ENCODE measurements at regions of chr18 and their contacts with region 1.

Region 1: DNA sequence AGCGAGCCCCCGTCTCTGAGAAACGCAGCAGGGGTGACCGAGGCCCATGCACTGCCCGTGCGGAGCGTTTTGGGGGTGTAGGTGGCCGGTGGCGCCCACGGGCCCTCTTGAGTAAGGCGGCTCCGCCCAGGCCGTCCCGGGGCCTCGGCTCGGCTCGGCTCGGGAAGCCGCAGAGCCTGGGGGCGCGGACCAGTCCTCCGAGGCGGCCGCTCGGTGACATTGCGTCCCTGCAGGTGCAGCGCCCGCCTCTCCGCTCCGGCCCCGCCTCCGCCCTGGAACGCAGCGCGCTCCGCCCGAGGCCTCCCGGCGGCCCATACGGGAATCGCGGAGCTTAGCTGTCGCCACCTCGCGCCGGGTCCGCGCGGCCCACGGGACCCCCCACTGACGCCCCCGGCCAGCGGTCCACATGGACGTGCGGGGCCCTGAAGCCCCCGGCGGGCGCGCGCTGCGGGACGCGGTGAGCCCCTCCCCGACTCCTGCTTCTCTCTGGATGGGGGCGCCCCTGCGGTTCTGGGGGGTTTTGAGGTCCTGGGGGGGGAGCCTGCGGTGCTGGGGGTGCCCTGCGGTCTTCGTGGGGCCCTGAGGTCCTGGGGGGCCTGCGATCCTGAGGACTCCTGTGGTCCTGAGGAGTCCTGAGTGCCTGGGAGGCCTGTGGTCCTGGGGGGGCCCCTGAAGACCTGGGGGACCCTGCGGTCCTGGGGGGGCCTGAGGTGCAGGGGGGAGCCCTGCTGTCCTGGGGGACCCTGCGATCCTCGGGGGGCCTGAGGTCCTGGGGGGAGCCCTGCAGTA is at the start of gene HSBP1L1:
- DNase-seq: peak; percentile 84
- CTCF ChIP-seq: peak; percentile 28

Region 2: DNA sequence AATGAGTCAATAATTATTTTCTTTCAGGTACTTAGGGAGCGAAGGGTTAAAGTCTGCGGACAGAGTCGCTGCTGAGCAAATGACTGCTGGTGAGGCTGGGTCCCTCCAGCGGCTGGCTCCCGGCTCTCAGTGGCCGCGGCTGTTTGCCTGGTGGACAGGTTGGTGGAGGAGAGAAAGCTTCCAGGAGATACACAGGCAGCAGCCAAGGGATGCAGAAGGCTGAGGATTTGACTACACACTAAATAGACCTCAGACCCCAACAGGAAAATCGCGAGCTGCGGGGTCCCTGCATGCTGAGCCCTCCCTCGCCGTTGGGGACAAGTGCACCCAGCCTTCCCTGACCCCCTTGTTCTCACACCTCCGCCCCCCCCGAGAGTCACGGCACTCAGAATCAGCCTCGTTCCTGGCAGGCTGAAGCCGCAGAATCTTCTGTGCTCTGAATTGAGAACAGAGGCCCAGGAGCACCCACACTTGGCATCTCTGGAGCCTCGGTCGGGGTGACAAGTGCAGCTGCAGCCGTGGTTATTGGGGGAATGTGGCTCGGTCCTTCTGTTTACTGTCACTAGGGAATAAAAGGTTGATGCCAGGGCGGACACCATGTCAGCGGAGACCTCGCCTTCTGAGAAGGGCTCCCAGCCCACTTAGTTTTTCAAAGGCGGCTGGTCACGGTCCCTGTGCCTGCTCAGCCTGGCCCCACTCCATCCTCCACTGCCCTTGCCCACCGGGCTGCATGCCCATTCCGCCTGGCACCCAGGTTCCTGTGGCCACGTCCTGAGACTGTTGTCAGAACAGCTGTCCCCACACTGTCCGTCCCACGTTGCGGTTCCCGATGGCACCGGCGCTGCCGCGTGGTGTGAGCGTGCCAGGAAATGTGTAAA is 87.1 kb before region 1 on chr18:
- CTCF ChIA-PET with region 1: no interaction called
- POLR2A ChIA-PET with region 1: no interaction called
- DNase-seq: no peak
- CTCF ChIP-seq: no peak

Region 3: GRCh38 chr18:79947054-79947755 is 17.3 kb before region 1 on chr18:
- CTCF ChIA-PET with region 1: interaction called, 11 read pairs
- POLR2A ChIA-PET with region 1: interaction called, 3 read pairs
- DNase-seq: no peak
- CTCF ChIP-seq: no peak

Region 4: DNA sequence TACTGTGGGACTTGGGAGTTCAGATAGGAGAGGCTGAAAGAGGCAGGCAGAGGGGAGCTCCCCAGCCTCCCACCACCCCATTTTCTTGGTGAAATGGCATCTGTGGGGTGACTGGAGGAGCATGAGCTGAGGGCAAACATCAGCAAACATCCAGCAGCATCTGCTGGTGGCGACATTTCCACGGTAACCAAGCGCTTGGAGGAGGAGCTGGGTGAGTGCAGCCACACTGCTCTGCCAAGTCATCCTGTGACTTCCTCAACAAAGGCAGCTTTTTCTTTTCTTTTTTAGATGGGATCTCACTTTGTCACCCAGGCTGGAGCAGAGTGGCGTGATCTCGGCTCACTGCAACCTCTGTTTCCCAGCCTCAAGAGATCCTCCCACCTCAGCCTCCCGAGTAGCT is 18.2 kb after region 1 on chr18:
- CTCF ChIA-PET with region 1: interaction called, 25 read pairs
- POLR2A ChIA-PET with region 1: interaction called, 3 read pairs
- DNase-seq: no peak
- CTCF ChIP-seq: no peak

Region 5: DNA sequence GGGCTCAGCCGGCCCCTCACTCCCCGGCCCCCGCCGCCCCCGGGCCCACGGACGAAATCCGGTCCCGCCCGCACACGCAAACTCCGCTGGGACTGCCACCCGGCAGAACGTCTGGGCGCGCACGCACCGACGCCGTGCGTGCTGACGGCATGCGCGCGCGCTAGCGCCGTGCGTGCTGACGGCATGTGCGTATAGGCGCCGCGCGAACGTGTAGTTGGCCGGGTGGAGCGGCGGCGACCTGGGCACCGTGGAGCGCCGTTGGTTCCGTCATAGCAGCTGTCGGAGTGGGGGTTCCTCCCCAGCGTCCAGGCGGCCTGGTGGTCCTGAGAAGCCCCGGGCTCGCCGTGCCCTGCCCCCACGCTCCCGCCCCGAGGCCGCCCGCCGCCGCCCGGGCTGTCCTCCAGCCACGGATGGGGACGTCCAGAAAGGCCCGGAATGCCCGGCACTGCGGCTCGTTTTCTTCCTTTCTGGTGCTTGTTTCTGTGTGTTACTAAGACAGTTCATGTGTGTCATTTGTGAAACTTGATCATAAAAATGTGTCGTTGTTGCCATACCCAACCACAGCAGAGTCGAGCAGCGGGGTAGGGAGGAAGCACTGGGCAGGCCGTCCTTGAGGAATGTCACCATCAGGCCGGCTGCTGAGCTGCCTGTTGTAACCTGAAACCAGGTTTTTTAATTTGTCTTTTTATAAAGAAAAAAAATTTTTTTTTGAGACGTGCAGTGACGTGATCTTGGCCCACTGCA is 24.1 kb after region 1 on chr18 and contains the start of gene TXNL4A:
- CTCF ChIA-PET with region 1: interaction called, 25 read pairs
- POLR2A ChIA-PET with region 1: interaction called, 3 read pairs
- DNase-seq: peak; percentile 91
- CTCF ChIP-seq: no peak

Measured in GM10248 (cell line).